Heart left ventricle (tissue), 16 donors: ENCODE measurements at regions of chr18 and their contacts with region 1.

Region 1: DNA sequence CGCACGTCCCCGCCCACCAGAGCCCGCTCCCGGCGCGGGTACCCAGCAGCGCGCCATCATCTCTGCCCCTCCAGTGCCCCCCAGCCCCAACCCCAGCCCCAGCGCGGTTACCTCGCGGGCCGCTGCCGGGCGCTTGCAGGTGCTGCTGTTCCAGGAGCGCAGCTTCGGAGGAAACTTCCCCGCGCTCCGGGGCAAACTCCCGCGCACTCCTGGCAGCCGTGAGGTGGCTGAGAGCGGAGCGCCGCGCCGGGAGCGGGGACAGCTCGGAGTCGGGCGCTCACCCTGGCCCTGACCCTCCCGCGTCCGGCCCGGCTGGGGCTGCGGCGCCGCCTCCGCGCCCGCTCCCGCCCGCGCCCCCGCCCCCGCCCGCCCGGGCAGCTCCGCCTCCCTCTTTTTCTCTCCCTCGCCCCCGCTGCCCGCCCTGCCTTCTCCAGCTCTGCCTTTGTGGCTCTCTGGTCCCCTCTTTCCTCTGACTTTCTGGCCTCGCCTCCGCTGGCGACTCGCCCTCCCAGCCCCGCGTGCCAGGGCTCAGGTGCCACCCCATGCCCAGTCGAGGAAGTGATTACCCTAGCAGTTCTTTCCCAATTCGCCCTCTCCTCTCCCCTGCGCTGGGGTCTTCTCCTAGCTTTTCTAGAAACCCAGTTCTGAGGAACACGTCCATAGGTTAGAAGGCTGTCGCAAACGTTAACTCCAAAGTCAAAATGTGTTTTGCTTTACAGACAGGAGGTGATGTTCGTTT is at the start of gene CHST9:
- DNase-seq: peak in 4 of 5 donors; percentile 23 to 63 (median 46)
- ATAC-seq: peak; percentile 55 to 87 (median 65)
- H3K4me3 ChIP-seq: peak within 1 kb of the TSS; percentile 33 to 77 (median 50)
- H3K27ac ChIP-seq: peak within 1 kb of the TSS in 1 of 12 donors; percentile 57
- H3K4me1 ChIP-seq: peaks cover 0 to 7% (median 0%) of the 10 kb centered on the region in 12 donors
- H3K27me3 ChIP-seq: peaks cover 0 to 38% (median 0%) of the 10 kb centered on the region in 9 donors
- CTCF ChIP-seq: no peak
- POLR2A ChIP-seq: no peak
- total RNA-seq, gene CHST9: 0.37 to 20.2 (median 4.8) TPM

Region 2: GRCh38 chr18:27030416-27030815 is 154.8 kb before region 1 on chr18:
- intact Hi-C with region 1: loop called in 2 of 10 experiments (anchors 10 kb)
- DNase-seq: no peak
- ATAC-seq: no peak
- H3K4me3 ChIP-seq: no peak overlapping the region
- H3K27ac ChIP-seq: no peak overlapping the region
- H3K4me1 ChIP-seq: peaks cover 0 to 10% (median 0%) of the 10 kb centered on the region in 12 donors
- H3K27me3 ChIP-seq: no peaks in the 10 kb centered on the region
- CTCF ChIP-seq: no peak
- POLR2A ChIP-seq: no peak